Natural killer cell (primary cell): ENCODE measurements at regions of chr11 and their contacts with region 1.

Region 1: DNA sequence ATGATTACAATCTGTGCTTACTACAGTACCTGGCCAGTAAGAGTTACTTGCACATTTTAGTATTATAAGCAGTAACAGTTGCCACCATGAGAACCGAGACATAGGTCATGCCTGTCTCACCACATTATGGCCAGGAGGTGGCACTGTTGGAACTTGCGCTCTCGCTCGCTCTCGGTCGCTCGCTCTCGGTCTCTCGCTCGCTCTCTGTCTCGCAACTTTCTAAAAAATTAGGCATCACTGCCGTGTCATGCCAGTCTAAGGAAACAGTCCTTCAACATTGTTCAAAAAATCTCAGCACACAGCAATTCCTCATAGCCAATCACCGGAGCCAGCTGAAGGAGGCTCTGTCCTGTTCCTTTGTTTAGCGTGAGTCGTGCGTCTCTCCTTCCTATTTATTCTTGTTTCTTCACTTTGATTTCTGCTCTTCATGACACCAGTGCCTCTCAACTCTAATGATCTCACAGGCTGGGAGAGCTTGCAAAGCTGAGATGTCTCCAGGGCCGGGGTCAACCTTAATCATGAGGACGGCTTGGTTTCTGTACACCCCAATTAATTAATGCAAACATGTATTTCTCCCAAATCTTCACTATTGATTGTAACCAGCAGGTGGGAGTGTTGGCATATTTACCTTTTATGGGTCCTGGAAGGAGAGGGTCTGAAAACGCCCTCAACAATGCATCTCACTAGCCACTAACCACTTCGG is 6.3 kb upstream of the ADAMTS8 start:
- DNase-seq: peak; percentile 56 to 88
- ATAC-seq: peak; percentile 87 to 91 (median 89)
- H3K4me3 ChIP-seq: peak overlapping the region; percentile 69
- H3K4me3 Mint-ChIP-seq: no peak overlapping the region
- H3K27ac ChIP-seq: no peak overlapping the region
- H3K27ac Mint-ChIP-seq: no peak overlapping the region
- H3K4me1 ChIP-seq: peaks cover 12% of the 10 kb centered on the region
- H3K4me1 Mint-ChIP-seq: peaks cover 19 to 23% of the 10 kb centered on the region in 2 donors
- H3K27me3 ChIP-seq: peaks cover 6% of the 10 kb centered on the region
- H3K27me3 Mint-ChIP-seq: peaks cover 8 to 13% of the 10 kb centered on the region in 2 donors
- CTCF ChIP-seq: peak; percentile 96

Region 2: DNA sequence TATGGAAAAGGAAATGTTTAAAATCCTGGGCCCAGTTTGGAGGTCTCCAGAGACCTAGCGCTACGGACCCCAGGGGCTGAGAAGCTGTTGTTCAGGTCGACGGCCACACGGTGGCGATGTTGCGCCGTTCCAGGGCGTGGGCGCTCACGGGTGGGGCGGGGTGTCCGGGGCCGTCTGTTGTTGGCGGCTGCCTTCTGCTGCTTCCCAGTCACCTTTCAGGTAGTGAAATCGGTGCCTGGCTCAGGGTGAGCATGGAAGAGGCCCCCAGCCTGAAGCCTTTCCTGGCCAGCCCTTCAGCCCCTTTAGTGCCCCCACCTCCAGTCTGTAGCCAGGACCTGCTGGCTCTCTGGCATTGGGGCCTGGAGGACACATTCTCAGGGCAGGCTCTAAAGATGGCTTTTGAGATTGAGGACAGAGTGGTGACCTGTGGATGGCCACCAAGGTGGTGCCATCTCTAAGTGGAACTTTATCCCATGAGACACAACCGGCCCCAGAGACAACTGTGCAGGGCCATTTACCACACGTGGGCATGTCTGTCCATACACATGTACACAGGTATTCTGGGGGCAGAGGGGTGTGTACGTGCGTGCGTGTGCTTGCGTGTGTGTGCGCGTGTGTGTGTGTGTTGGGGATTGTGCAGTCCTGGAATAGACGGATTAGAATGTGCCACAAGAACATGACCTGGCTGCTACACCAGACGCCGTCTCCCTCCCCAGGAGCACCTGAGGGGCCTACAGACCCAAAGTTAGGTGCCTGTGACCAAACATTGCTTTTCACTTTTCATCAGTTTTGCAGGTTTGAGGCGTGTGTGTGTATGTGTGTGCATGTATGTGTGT is 221.3 kb before region 1 on chr11:
- intact Hi-C with region 1: loop called (anchors 2 kb)
- DNase-seq: peak; percentile 72 to 84
- ATAC-seq: peak; percentile 86 to 99 (median 99)
- H3K4me3 ChIP-seq: no peak overlapping the region
- H3K4me3 Mint-ChIP-seq: no peak overlapping the region
- H3K27ac ChIP-seq: no peak overlapping the region
- H3K27ac Mint-ChIP-seq: no peak overlapping the region
- H3K4me1 ChIP-seq: peaks cover 10% of the 10 kb centered on the region
- H3K4me1 Mint-ChIP-seq: no peaks in the 10 kb centered on the region
- H3K27me3 ChIP-seq: no peaks in the 10 kb centered on the region
- H3K27me3 Mint-ChIP-seq: peaks cover 0 to 6% of the 10 kb centered on the region in 2 donors
- CTCF ChIP-seq: peak; percentile 98

Region 3: DNA sequence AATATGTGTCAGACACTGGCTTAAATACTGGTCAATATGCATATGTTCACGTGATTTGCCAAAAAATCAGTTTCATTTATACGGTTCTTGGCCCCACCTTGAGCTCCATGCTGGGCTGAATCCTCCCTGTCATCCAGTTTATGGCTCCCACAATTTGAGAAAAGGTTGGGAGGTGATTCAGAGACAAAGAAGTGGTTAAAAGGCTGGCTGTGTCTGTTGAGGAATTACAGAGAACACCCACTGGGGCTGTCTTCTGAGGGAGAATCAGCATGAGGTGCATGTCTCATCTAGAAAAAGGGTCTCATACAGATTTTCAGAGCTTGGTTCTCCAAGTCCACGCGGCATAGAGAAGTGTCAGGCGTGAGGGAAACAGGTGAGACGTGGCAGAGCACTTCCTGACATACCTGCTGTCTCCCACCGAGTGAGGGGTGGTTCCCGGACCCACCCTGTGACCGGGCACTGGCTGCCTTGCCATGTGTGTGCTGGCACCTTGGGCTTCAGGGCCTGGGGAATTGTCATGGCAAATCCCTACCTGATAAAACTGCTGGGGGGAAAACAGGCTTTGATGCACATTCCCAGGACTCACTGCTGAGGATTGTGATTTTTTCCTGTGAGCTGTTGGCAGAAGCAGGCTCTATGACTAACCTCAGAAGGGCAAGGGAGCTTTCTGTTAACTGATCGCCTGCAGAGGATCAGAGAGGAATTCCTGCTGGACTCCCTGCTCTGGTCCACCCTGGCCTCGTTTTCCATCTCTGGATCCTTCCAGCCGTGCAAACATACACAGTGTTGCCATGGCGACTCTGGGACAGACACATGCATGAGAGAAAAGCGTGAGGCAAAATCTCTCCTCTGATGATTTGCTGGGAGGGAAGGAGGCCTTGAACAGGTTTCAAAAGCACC is 237.4 kb after region 1 on chr11:
- intact Hi-C with region 1: no loop called
- DNase-seq: no peak
- ATAC-seq: no peak
- H3K4me3 ChIP-seq: no peak overlapping the region
- H3K4me3 Mint-ChIP-seq: no peak overlapping the region
- H3K27ac ChIP-seq: no peak overlapping the region
- H3K27ac Mint-ChIP-seq: no peak overlapping the region
- H3K4me1 ChIP-seq: no peaks in the 10 kb centered on the region
- H3K4me1 Mint-ChIP-seq: no peaks in the 10 kb centered on the region
- H3K27me3 ChIP-seq: no peaks in the 10 kb centered on the region
- H3K27me3 Mint-ChIP-seq: peaks cover 8 to 11% of the 10 kb centered on the region in 2 donors
- CTCF ChIP-seq: no peak

Region 4: DNA sequence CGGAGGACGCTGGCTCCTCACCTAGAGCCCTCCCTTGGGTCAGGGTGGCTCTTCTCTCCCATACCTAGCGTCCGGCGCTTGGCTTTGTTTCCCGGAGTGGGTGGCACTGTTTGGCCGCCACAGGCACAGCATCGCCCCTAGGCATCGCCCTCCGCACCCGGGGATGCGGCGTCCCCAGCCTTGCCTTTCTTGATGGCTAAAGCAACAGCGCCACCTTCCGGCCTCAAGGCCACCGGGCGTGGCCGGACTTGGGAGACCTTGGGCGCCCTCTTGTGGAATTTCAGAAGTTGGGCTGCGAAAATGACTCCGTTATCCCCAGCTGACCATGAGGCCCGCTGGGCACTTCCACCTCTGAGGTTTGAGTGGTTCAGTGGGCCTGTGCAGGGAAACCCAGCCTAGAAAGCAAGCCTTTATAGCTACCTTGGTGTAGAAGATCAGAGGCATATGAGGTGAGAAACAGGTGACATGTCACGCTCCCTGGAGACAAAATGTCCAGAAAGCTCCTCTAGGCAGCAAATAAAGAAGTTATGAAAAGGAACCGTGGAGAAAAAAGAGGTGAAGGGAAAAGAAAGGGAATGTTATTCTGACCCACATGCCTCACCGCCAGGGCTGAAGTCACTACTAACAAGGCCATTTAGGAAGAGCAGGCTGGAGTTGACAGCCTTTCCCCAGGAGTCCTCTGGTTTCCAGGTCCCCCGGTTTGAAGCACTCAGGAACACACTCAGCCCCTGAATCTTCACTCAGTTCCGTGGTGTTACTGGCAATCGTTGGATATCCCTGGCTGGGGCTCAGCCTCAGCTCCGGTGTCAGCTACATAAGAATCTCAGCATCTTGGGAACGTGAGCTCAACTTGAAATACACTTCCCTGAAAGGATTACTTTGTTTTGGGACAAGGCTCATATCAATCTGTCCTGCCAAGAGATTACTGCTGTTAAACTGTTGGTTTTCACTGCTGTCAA is 427.5 kb after region 1 on chr11:
- intact Hi-C with region 1: loop called (anchors 1 kb)
- DNase-seq: peak; percentile 84 to 95
- ATAC-seq: peak; percentile 90 to 99 (median 97)
- H3K4me3 ChIP-seq: no peak overlapping the region
- H3K4me3 Mint-ChIP-seq: no peak overlapping the region
- H3K27ac ChIP-seq: no peak overlapping the region
- H3K27ac Mint-ChIP-seq: no peak overlapping the region
- H3K4me1 ChIP-seq: peaks cover 4% of the 10 kb centered on the region
- H3K4me1 Mint-ChIP-seq: peaks cover 10 to 12% of the 10 kb centered on the region in 2 donors
- H3K27me3 ChIP-seq: no peaks in the 10 kb centered on the region
- H3K27me3 Mint-ChIP-seq: peaks cover 4 to 9% of the 10 kb centered on the region in 2 donors
- CTCF ChIP-seq: peak; percentile 100

Region 5: GRCh38 chr11:130894322-130895025 is 459.8 kb after region 1 on chr11:
- intact Hi-C with region 1: loop called (anchors 1 kb)
- DNase-seq: peak; percentile 66 to 82
- ATAC-seq: peak; percentile 83 to 99 (median 96)
- H3K4me3 ChIP-seq: no peak overlapping the region
- H3K4me3 Mint-ChIP-seq: no peak overlapping the region
- H3K27ac ChIP-seq: no peak overlapping the region
- H3K27ac Mint-ChIP-seq: no peak overlapping the region
- H3K4me1 ChIP-seq: no peaks in the 10 kb centered on the region
- H3K4me1 Mint-ChIP-seq: peaks cover 0 to 6% of the 10 kb centered on the region in 2 donors
- H3K27me3 ChIP-seq: no peaks in the 10 kb centered on the region
- H3K27me3 Mint-ChIP-seq: no peaks in the 10 kb centered on the region
- CTCF ChIP-seq: peak; percentile 93